Caco-2 (cell line): ENCODE measurements at regions of chr4 and their contacts with region 1.

Region 1: DNA sequence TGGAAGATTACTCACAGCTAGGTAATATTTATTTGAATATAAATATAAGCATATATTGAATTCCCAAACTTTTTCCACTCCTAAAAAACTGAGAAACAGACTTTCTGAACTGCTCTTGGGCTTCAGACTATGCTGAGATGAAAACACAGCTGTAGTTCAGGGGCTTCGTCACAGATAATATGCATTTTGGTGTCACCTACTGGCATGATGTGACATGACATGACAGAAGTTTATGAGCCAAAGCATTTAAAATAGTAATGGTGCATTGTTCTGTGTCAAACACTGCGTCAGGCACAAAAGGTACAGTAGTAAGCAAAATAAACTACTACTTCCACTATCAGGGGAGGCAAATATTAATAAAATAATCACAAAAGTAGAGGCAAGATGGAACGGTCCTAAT is 171.3 kb downstream of the BTC start:
- DNase-seq: peak; percentile 52 to 65
- H3K4me3 ChIP-seq: no peak overlapping the region
- H3K4me3 Mint-ChIP-seq: peak overlapping the region; percentile 19
- H3K27ac Mint-ChIP-seq: peak overlapping the region; percentile 86
- H3K4me1 ChIP-seq: peaks cover 94% of the 10 kb centered on the region
- H3K4me1 Mint-ChIP-seq: peaks cover 55% of the 10 kb centered on the region
- H3K27me3 ChIP-seq: no peaks in the 10 kb centered on the region
- H3K27me3 Mint-ChIP-seq: no peaks in the 10 kb centered on the region
- CTCF ChIP-seq: peak; percentile 60 to 65

Region 2: DNA sequence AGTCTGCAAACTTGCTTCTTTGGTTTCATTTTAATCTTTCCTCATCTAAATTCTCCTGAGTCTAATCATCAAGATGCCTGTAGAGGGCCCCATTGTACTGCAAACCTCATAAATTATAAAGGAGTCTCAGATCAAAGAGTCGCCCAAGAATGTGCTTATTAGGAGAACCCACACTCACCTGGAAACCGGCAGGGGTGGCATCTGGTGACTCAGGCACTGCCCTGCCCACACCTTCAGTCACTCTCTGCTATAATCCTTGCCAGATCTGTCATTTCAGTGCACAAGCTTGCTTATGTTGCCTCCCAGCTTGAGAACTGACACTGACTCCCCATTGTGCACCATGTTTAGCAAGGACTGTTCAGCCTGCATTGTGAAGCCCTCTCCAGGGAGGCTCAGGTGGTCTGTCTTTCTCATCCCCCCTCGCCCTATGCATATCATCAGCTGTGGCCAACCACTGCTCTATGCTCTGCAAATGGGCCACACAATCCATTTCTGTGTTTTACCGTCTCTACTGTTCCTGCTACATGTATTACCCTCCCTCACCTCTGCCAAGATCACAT is 302.4 kb before region 1 on chr4:
- CTCF ChIA-PET with region 1: no interaction called
- POLR2A ChIA-PET with region 1: no interaction called
- intact Hi-C with region 1: loop called (anchors 1 kb)
- DNase-seq: peak; percentile 66 to 72
- H3K4me3 ChIP-seq: no peak overlapping the region
- H3K4me3 Mint-ChIP-seq: peak overlapping the region; percentile 1
- H3K27ac Mint-ChIP-seq: no peak overlapping the region
- H3K4me1 ChIP-seq: peaks cover 17% of the 10 kb centered on the region; the same call in 1 of the 2 replicates
- H3K4me1 Mint-ChIP-seq: peaks cover 10% of the 10 kb centered on the region
- H3K27me3 ChIP-seq: no peaks in the 10 kb centered on the region
- H3K27me3 Mint-ChIP-seq: no peaks in the 10 kb centered on the region
- CTCF ChIP-seq: peak; percentile 48 to 66

Region 3: GRCh38 chr4:74444891-74445642 is 178.0 kb before region 1 on chr4 and contains the start of gene AREG:
- CTCF ChIA-PET with region 1: interaction called, 3 read pairs
- POLR2A ChIA-PET with region 1: interaction called, 3 read pairs
- intact Hi-C with region 1: loop called (anchors 1 kb)
- DNase-seq: peak; percentile 85 to 88
- H3K4me3 ChIP-seq: peak within 1 kb of the TSS; percentile 82
- H3K4me3 Mint-ChIP-seq: peak within 1 kb of the TSS; percentile 86
- H3K27ac Mint-ChIP-seq: peak within 1 kb of the TSS; percentile 73
- H3K4me1 ChIP-seq: peaks cover 8% of the 10 kb centered on the region
- H3K4me1 Mint-ChIP-seq: peaks cover 6% of the 10 kb centered on the region
- H3K27me3 ChIP-seq: no peaks in the 10 kb centered on the region
- H3K27me3 Mint-ChIP-seq: no peaks in the 10 kb centered on the region
- CTCF ChIP-seq: peak; percentile 43 to 68
- total RNA-seq, gene AREG: 146 and 162 TPM in 2 replicates

Region 4: DNA sequence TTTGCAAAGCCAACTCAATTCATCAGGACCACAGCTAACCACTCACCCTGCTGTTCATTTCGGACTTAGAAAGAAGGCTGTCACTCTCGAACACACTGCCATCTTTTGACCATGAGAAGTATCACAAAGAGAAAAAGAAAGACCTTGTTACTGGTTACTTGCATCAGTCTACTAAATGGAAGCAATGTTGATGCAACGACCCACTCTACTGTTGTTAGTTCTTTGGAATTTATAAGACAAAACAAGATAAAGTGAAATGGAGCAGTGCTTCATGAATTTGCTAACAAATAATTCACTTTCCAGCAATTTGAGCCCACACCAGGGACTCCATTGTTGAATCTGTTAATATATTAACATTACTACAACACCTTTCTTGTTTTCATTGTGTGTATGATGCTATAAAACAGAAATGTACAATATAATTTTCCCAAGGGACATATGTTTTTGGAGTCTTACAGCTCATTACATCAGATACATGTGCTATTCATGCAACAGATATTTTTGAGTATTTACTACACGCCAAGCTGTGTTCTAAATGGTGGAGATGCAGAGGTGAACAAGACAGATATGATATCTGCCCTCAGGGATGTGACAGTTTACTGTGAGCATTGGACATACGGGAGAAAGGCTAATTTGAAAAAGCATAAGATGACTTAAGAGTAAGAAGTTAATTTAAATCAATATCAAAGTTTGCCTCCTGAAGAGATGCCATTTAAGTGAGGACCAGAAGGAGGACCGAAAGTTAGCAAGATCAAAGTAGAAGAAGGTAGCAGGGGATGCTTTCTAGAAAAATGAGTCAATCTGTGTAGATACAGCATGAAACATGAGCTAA is 90.9 kb before region 1 on chr4:
- CTCF ChIA-PET with region 1: interaction called, 5 read pairs
- POLR2A ChIA-PET with region 1: no interaction called
- intact Hi-C with region 1: loop called (anchors 1 kb)
- DNase-seq: peak; percentile 53 to 76
- H3K4me3 ChIP-seq: no peak overlapping the region
- H3K4me3 Mint-ChIP-seq: peak overlapping the region; percentile 15
- H3K27ac Mint-ChIP-seq: peak overlapping the region; percentile 93
- H3K4me1 ChIP-seq: peaks cover 77% of the 10 kb centered on the region
- H3K4me1 Mint-ChIP-seq: peaks cover 46% of the 10 kb centered on the region
- H3K27me3 ChIP-seq: no peaks in the 10 kb centered on the region
- H3K27me3 Mint-ChIP-seq: no peaks in the 10 kb centered on the region
- CTCF ChIP-seq: peak; percentile 57 to 71

Region 5: GRCh38 chr4:74598611-74599290 is 24.3 kb before region 1 on chr4:
- CTCF ChIA-PET with region 1: no interaction called
- POLR2A ChIA-PET with region 1: no interaction called
- intact Hi-C with region 1: no loop called
- DNase-seq: no peak
- H3K4me3 ChIP-seq: no peak overlapping the region
- H3K4me3 Mint-ChIP-seq: no peak overlapping the region
- H3K27ac Mint-ChIP-seq: no peak overlapping the region
- H3K4me1 ChIP-seq: peaks cover 7% of the 10 kb centered on the region; the same call in 1 of the 2 replicates
- H3K4me1 Mint-ChIP-seq: no peaks in the 10 kb centered on the region
- H3K27me3 ChIP-seq: no peaks in the 10 kb centered on the region
- H3K27me3 Mint-ChIP-seq: no peaks in the 10 kb centered on the region
- CTCF ChIP-seq: no peak

Region 6: GRCh38 chr4:74654230-74654681 is 31.2 kb after region 1 on chr4:
- CTCF ChIA-PET with region 1: interaction called, 3 read pairs
- POLR2A ChIA-PET with region 1: interaction called, 6 read pairs
- intact Hi-C with region 1: loop called (anchors 1 kb)
- DNase-seq: peak; percentile 93 to 95
- H3K4me3 ChIP-seq: no peak overlapping the region
- H3K4me3 Mint-ChIP-seq: peak overlapping the region; percentile 60
- H3K27ac Mint-ChIP-seq: peak overlapping the region; percentile 87
- H3K4me1 ChIP-seq: peaks cover 81% of the 10 kb centered on the region
- H3K4me1 Mint-ChIP-seq: peaks cover 59% of the 10 kb centered on the region
- H3K27me3 ChIP-seq: no peaks in the 10 kb centered on the region
- H3K27me3 Mint-ChIP-seq: no peaks in the 10 kb centered on the region
- CTCF ChIP-seq: no peak

Region 7: DNA sequence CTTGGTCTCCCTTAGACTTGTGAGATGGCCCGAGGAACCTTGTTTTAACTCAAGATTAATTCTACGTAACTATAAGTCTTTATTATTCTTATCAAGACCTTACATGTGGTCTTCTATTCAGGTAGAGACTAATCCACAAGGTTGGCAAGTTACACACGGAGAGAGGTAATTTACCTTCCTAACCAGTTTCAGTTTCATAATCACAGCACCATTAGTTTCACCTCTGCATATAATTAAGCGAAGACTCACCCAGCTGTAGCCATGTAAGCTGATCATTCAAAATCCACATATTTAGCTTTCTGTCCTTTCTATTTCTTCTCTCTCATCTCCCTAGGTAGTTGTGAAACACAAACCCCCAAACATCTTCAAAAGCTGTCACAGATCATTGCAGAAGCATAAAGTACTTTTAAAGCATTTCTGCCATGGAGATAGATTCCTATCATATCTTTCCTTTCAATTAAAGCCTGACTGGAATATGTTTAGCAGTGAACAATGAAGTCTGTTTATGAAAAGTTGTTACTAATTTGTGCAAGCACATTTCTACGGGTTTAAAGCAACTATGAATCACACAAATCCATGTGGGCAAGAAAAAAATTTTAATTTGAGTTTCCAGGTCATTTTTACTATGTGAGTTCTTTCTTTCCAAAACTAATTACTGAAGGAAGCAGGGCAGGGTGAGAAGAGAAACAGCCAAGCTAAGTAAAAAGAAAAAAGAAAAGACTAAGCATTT is 92.8 kb after region 1 on chr4:
- CTCF ChIA-PET with region 1: no interaction called
- POLR2A ChIA-PET with region 1: no interaction called
- intact Hi-C with region 1: no loop called
- DNase-seq: no peak
- H3K4me3 ChIP-seq: no peak overlapping the region
- H3K4me3 Mint-ChIP-seq: no peak overlapping the region
- H3K27ac Mint-ChIP-seq: no peak overlapping the region
- H3K4me1 ChIP-seq: no peaks in the 10 kb centered on the region
- H3K4me1 Mint-ChIP-seq: no peaks in the 10 kb centered on the region
- H3K27me3 ChIP-seq: no peaks in the 10 kb centered on the region
- H3K27me3 Mint-ChIP-seq: peaks cover 1% of the 10 kb centered on the region
- CTCF ChIP-seq: no peak

Region 8: GRCh38 chr4:74768857-74769525 is 145.9 kb after region 1 on chr4:
- CTCF ChIA-PET with region 1: no interaction called
- POLR2A ChIA-PET with region 1: no interaction called
- intact Hi-C with region 1: no loop called
- DNase-seq: peak in 1 of 2 experiments; percentile 7
- H3K4me3 ChIP-seq: no peak overlapping the region
- H3K4me3 Mint-ChIP-seq: no peak overlapping the region
- H3K27ac Mint-ChIP-seq: no peak overlapping the region
- H3K4me1 ChIP-seq: peaks cover 4% of the 10 kb centered on the region; the same call in 1 of the 2 replicates
- H3K4me1 Mint-ChIP-seq: peaks cover 6% of the 10 kb centered on the region
- H3K27me3 ChIP-seq: no peaks in the 10 kb centered on the region
- H3K27me3 Mint-ChIP-seq: no peaks in the 10 kb centered on the region
- CTCF ChIP-seq: no peak